Gastrocnemius medialis (tissue), 4 donors: ENCODE measurements at regions of chr1 and their contacts with region 1.

Region 1: DNA sequence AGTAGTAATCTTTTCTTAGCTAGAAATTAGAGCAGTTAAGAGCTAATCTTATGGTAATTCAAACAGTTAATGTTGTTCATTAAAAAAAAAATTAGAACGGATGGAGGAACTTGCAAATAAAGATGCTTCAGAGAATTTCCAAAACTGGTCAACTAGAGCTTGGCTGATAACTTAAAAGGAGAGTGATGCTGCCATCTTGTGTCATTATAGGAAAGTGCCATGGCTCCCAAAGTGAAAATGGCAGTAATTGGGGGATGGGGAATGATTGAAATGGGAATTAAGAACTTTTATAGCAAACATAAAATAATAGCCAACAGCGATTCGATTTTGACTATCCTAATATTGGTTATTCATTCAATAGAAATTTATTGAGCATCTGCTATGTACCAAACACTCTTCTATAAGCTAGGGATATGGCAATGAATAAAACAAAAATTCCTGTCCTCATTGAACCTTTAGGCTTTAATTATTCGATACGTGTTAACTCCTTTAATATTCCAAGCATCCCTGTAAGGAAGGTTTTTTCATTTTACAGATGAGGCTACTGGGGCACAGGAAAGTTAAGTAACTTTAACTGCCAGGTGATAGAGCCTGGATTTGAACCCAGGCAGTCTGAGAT is 5.7 kb upstream of the PLPP3 start:
- DNase-seq: no peak
- ATAC-seq: peak; percentile 72 to 88
- H3K4me3 ChIP-seq: no peak overlapping the region
- H3K27ac ChIP-seq: no peak overlapping the region
- H3K4me1 ChIP-seq: peaks cover 10 to 14% of the 10 kb centered on the region in 2 donors
- H3K27me3 ChIP-seq: no peaks in the 10 kb centered on the region
- CTCF ChIP-seq: peak; percentile 69 to 93 (median 84)
- POLR2A ChIP-seq: no peak

Region 2: DNA sequence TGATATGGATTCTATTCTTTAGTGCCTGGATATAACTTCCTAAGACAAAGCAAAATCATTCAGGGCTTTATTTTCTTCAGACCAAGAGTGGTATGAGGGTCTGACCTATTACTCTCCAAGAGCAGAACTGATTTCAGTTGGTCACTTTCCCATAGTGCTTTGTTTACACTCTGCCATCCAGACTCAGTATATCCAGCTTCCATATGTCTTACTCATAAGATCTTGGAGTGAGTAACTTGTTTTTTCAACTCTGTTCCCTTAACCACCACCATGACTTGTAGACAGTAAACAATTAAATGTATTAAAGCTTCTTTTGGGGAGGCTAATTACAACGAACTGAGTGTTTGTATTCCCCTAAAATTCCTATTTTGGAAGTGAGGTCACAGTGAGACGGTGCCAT is 1453.2 kb before region 1 on chr1:
- in situ Hi-C with region 1: loop called in 2 of 4 experiments (anchors 10 to 25 kb)
- intact Hi-C with region 1: no loop called
- DNase-seq: no peak
- ATAC-seq: no peak
- H3K4me3 ChIP-seq: no peak overlapping the region
- H3K27ac ChIP-seq: no peak overlapping the region
- H3K4me1 ChIP-seq: no peaks in the 10 kb centered on the region
- H3K27me3 ChIP-seq: no peaks in the 10 kb centered on the region
- CTCF ChIP-seq: no peak
- POLR2A ChIP-seq: no peak

Region 3: DNA sequence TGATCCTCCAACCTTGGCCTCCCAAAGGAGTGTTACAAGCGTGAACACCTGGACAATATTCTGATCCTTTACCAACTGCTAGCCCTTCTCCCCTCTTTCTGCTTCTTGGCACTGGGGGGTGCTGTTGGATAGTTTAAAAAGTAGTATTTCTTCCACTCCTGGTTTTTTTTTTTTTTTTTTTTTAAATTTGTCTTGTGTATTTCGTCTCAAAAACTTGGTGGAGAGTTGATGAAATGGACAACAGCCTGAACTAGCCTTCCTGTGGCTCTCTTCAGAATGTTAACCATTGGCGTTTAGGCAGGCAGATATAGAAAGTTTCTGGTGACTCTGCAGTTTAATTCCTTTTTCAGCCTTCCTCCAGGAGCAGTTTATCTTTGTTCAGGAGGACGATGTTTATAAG is 1300.2 kb before region 1 on chr1:
- in situ Hi-C with region 1: loop called (anchors 5 to 10 kb)
- intact Hi-C with region 1: loop called (anchors 1 kb)
- DNase-seq: no peak
- ATAC-seq: peak; percentile 64 to 65
- H3K4me3 ChIP-seq: no peak overlapping the region
- H3K27ac ChIP-seq: no peak overlapping the region
- H3K4me1 ChIP-seq: no peaks in the 10 kb centered on the region
- H3K27me3 ChIP-seq: no peaks in the 10 kb centered on the region
- CTCF ChIP-seq: peak; percentile 32 to 61 (median 47)
- POLR2A ChIP-seq: no peak

Region 4: DNA sequence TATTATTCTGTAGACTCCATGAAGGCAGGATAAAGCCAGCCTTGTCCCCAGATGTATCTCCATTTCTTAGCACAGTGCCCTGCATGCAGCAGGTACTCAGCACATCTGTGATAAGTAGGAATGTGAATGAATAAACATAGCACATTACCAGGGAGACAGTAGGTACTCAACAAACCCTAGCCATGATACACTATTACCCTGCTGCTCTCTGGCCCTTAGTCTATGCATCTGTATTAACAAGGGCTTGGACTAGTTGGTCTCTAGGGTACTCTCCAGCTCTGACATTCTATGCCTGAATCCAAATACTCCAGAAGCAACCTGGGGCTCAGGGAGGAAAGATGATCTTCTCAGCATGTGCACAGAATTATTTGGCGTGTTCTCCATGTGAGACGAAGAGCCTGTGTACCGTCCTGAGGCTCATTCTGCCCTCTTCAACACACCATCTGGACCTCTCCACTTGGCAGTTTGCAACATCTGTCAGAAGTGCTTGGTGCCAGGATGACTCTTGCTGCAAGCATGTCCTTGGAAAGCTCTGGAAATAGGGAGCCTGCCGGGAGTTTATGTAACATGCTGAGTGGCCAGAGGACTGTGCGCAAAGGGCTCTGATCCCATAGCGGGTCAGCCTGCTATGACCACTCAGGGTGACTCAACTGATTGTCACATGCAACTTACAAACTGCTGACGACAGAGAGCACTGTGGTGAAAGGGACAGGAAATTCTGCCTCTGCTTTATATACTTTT is 1141.7 kb before region 1 on chr1:
- in situ Hi-C with region 1: no loop called
- intact Hi-C with region 1: loop called (anchors 5 kb)
- DNase-seq: peak; percentile 91 to 93
- ATAC-seq: peak; percentile 97 to 99
- H3K4me3 ChIP-seq: no peak overlapping the region
- H3K27ac ChIP-seq: peak overlapping the region; percentile 71 to 79 (median 74)
- H3K4me1 ChIP-seq: peaks cover 0 to 10% of the 10 kb centered on the region in 2 donors
- H3K27me3 ChIP-seq: no peaks in the 10 kb centered on the region
- CTCF ChIP-seq: no peak
- POLR2A ChIP-seq: peak in 1 of 2 donors; percentile 23

Region 5: DNA sequence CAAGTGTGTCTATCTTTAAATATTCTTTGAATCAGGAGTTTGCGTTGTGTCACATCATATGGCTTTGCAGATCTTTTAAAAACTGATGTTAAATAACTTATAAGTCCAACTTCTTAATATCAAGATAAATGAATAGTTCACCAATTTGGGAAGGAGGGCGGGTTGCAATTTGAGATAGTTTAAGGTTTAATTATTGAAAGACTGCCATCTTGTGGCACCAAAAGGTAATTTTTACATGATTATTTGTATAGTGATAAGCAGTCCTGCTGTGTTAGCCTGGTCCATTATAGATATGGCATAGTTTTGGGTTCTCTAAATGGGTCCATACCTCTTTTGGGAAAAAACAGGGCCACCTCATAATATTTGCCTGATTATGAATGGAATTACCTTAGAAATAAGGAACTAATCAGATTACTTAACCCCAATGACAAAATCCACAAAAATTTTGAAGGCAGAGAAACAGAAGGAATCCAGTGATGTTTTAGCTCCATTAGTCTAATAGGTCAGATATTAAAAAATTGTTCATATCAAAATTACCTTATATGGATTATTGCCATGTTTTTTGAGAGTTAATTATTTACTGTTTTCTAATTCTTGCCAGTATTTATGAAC is 124.4 kb after region 1 on chr1:
- in situ Hi-C with region 1: loop called in 1 of 4 experiments (anchors 10 kb)
- intact Hi-C with region 1: loop called (anchors 5 kb)
- DNase-seq: no peak
- ATAC-seq: peak; percentile 64 to 83
- H3K4me3 ChIP-seq: no peak overlapping the region
- H3K27ac ChIP-seq: no peak overlapping the region
- H3K4me1 ChIP-seq: peaks cover 0 to 4% of the 10 kb centered on the region in 2 donors
- H3K27me3 ChIP-seq: no peaks in the 10 kb centered on the region
- CTCF ChIP-seq: peak; percentile 58 to 67 (median 64)
- POLR2A ChIP-seq: no peak